ENCODE measurements at regions of chr20 and their contacts with region 1.

Region 1: GRCh38 chr20:33992923-33993575 is 662 bp upstream of the RALY start:
- DNase-seq: peak; percentile 97 to 100 (median 100)
- ATAC-seq: peak; percentile 91
- H3K4me3 ChIP-seq: peak overlapping the region; percentile 96
- H3K4me3 Mint-ChIP-seq: peak overlapping the region; percentile 87 to 99 (median 96)
- H3K27ac ChIP-seq: peak overlapping the region; percentile 97
- H3K27ac Mint-ChIP-seq: peak overlapping the region; percentile 91 to 99 (median 96)
- H3K4me1 ChIP-seq: peaks cover 32 to 43% of the 10 kb centered on the region in 2 donors
- H3K4me1 Mint-ChIP-seq: peaks cover 44 to 69% (median 60%) of the 10 kb centered on the region in 7 donors
- H3K27me3 ChIP-seq: no peaks in the 10 kb centered on the region
- H3K27me3 Mint-ChIP-seq: no peaks in the 10 kb centered on the region

Region 2: DNA sequence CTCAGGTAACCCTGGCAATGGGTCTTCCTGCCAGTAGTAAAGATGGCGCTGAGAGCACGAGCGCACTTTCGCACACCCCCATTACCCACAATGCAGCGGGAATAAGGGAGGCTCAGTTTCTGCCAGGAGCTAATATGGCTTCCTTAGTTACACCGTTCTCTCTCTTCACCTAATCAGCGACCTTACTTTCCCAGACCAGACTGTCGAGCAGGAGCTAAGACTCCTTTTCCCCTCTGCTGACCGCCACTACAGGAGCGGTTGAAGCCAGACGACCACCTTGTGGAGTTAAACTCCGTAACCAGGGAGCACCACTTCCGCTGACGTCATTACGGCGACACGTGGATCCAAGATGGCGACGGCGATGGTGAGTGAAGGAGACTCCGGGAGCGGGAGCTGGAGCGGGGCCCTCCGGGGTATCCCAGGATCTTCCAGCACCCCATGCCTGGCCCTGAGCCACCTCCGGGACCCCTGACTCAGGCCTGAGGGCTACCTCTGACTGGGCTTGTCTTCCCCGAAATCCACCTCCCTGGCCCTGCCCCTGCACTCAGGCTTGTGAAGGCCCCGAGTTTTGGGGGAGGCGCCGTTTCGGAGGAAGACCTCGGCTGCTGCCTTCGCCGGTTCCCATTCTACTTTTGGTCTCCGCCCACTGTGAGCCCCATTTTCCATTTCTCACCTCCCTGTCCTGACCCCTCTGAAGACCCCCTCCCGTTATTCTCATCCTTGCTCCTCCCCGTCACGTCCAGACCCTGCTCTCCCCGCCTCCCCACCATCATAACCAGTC is 1883.5 kb before region 1 on chr20 and contains the start of gene TM9SF4:
- CTCF ChIA-PET with region 1: no interaction called
- POLR2A ChIA-PET with region 1: no interaction called
- intact Hi-C with region 1: loop called in 1 of 2 experiments (anchors 5 kb)
- DNase-seq: peak; percentile 87 to 96 (median 93)
- ATAC-seq: peak; percentile 92
- H3K4me3 ChIP-seq: peak within 1 kb of the TSS; percentile 92
- H3K4me3 Mint-ChIP-seq: peak within 1 kb of the TSS; percentile 78 to 100 (median 96)
- H3K27ac ChIP-seq: peak within 1 kb of the TSS; percentile 94
- H3K27ac Mint-ChIP-seq: peak within 1 kb of the TSS; percentile 95 to 100 (median 100)
- H3K4me1 ChIP-seq: peaks cover 11% of the 10 kb centered on the region in 2 donors
- H3K4me1 Mint-ChIP-seq: peaks cover 26 to 44% (median 39%) of the 10 kb centered on the region in 7 donors
- H3K27me3 ChIP-seq: no peaks in the 10 kb centered on the region
- H3K27me3 Mint-ChIP-seq: no peaks in the 10 kb centered on the region
- total RNA-seq, gene TM9SF4: 35.2 to 61.0 (median 41.5) TPM

Region 3: DNA sequence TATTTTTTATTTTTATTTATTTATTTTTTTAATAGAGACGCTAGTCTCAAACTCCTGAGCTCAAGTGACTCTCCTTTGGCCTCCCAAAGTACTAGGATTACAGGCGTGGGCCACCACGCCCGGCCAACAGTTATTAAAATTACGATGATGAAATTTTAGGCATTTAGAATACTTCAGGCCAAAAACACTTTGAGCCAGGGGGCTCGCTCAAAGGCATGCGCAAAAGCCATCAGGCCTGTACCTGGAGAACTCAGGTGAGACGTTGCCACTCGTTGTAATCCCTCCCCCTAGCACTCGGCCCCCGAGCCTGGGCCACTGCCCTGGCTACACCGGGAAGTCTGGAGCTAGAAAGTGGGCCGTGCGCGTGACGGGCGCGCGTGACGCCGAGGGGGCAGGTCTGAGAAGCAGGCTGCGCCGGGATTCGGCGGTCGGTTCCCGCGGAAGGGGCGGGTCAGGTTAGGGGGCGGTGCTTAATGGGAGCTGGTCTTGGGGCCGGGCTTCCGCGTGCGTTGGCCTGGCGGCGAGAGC is 503.5 kb before region 1 on chr20:
- CTCF ChIA-PET with region 1: no interaction called
- POLR2A ChIA-PET with region 1: interaction called, 6 read pairs
- intact Hi-C with region 1: loop called (anchors 1 kb)
- DNase-seq: peak; percentile 97 to 99 (median 99)
- ATAC-seq: peak; percentile 97
- H3K4me3 ChIP-seq: peak overlapping the region; percentile 75
- H3K4me3 Mint-ChIP-seq: peak overlapping the region; percentile 84 to 95 (median 88)
- H3K27ac ChIP-seq: peak overlapping the region; percentile 94
- H3K27ac Mint-ChIP-seq: peak overlapping the region; percentile 86 to 96 (median 90)
- H3K4me1 ChIP-seq: peaks cover 4 to 9% of the 10 kb centered on the region in 2 donors
- H3K4me1 Mint-ChIP-seq: peaks cover 0 to 30% (median 13%) of the 10 kb centered on the region in 7 donors
- H3K27me3 ChIP-seq: no peaks in the 10 kb centered on the region
- H3K27me3 Mint-ChIP-seq: no peaks in the 10 kb centered on the region

Region 4: GRCh38 chr20:33810885-33811777 is 181.9 kb before region 1 on chr20 and contains the start of gene CHMP4B:
- CTCF ChIA-PET with region 1: no interaction called
- POLR2A ChIA-PET with region 1: interaction called, 14 read pairs
- intact Hi-C with region 1: loop called (anchors 1 kb)
- DNase-seq: peak; percentile 94 to 99 (median 98)
- ATAC-seq: peak; percentile 98
- H3K4me3 ChIP-seq: peak within 1 kb of the TSS; percentile 74
- H3K4me3 Mint-ChIP-seq: peak within 1 kb of the TSS; percentile 89 to 100 (median 95)
- H3K27ac ChIP-seq: peak within 1 kb of the TSS; percentile 95
- H3K27ac Mint-ChIP-seq: peak within 1 kb of the TSS; percentile 84 to 96 (median 91)
- H3K4me1 ChIP-seq: peaks cover 22 to 23% of the 10 kb centered on the region in 2 donors
- H3K4me1 Mint-ChIP-seq: peaks cover 36 to 47% (median 42%) of the 10 kb centered on the region in 7 donors
- H3K27me3 ChIP-seq: no peaks in the 10 kb centered on the region
- H3K27me3 Mint-ChIP-seq: peaks cover 0 to 5% (median 0%) of the 10 kb centered on the region in 5 donors
- total RNA-seq, gene CHMP4B: 47.5 to 80.8 (median 54.4) TPM

Region 5: DNA sequence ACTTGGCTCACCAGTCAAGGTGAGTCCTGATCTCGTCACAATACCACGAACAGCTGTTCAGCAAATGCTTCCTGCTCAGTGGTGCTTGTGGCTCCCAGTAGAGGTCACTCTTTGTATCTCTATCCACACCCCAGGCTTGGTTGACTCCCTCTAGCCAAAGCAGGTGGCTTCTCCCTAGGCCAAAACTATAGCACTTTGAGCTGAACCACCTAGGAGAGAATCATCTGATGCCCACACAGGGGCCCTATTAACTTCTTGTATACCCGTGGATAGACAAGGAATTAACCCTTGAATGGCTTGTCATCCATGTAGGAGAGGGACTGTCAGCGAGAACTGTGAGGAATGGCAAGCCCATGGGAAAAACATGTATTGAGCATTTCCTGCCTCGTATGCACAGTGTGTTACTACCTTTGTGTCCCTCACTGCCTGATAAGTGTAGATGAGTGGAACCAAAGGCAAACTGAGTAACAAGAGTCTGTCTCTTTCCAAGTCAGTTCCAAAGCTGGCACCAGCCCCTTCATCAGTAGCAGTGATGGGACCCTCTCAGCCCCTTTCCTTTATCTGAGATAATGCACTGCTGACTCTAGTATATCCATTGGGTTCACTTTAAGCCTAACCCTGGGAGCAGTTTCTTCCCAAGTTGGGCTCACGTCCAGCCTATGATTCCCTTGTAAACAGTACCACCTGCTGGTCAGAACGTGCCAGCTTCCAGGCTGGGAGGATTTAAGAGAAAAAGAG is 76.5 kb after region 1 on chr20:
- CTCF ChIA-PET with region 1: interaction called, 7 read pairs
- POLR2A ChIA-PET with region 1: interaction called, 12 read pairs
- intact Hi-C with region 1: loop called in 1 of 2 experiments (anchors 1 kb)
- DNase-seq: peak in 8 of 9 donors; percentile 30 to 64 (median 53)
- ATAC-seq: peak; percentile 90
- H3K4me3 ChIP-seq: no peak overlapping the region
- H3K4me3 Mint-ChIP-seq: no peak overlapping the region
- H3K27ac ChIP-seq: peak overlapping the region; percentile 22
- H3K27ac Mint-ChIP-seq: peak overlapping the region in 7 of 9 donors; percentile 10 to 81 (median 41)
- H3K4me1 ChIP-seq: peaks cover 5 to 12% of the 10 kb centered on the region in 2 donors
- H3K4me1 Mint-ChIP-seq: peaks cover 29 to 51% (median 38%) of the 10 kb centered on the region in 7 donors
- H3K27me3 ChIP-seq: no peaks in the 10 kb centered on the region
- H3K27me3 Mint-ChIP-seq: no peaks in the 10 kb centered on the region

Region 6: DNA sequence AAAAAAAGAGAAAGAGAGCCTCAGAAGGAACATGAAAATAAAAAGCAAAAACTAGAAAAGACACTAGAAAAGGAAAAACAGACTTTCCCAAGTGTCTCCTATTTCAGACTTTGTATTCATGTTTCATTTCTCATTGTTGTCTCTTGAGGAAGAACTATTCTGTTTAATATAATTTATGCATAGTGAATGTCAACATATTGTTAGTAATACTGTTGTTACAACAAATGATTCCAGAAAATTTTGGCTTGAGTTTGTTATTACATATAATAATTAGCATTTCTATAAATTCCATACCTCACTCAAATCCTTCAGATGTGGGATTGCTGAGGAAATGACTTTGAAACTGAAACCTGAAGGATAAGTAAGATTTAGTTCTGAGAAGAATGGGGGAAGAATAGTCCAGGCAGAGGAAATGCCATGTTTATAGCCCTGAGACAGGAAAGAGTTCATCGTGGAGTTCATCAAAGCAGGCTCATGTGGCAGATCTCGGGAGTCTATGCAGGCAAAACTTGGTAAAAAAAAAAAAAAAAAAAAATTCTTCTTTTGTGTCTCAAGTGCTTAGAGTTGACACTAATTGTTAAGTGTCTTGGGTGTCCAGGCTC is 172.1 kb after region 1 on chr20:
- CTCF ChIA-PET with region 1: no interaction called
- POLR2A ChIA-PET with region 1: no interaction called
- intact Hi-C with region 1: no loop called
- DNase-seq: no peak
- ATAC-seq: no peak
- H3K4me3 ChIP-seq: no peak overlapping the region
- H3K4me3 Mint-ChIP-seq: no peak overlapping the region
- H3K27ac ChIP-seq: no peak overlapping the region
- H3K27ac Mint-ChIP-seq: peak overlapping the region in 1 of 9 donors; percentile 15
- H3K4me1 ChIP-seq: no peaks in the 10 kb centered on the region
- H3K4me1 Mint-ChIP-seq: peaks cover 0 to 9% (median 5%) of the 10 kb centered on the region in 7 donors
- H3K27me3 ChIP-seq: no peaks in the 10 kb centered on the region
- H3K27me3 Mint-ChIP-seq: peaks cover 0 to 7% (median 2%) of the 10 kb centered on the region in 5 donors

Region 7: GRCh38 chr20:34516247-34517113 is 523.4 kb after region 1 on chr20 and contains the start of gene DYNLRB1:
- CTCF ChIA-PET with region 1: no interaction called
- POLR2A ChIA-PET with region 1: interaction called, 4 read pairs
- intact Hi-C with region 1: loop called in 1 of 2 experiments (anchors 2 kb)
- DNase-seq: peak; percentile 87 to 94 (median 92)
- ATAC-seq: peak; percentile 88
- H3K4me3 ChIP-seq: peak within 1 kb of the TSS; percentile 96
- H3K4me3 Mint-ChIP-seq: peak within 1 kb of the TSS; percentile 97 to 100 (median 99)
- H3K27ac ChIP-seq: peak within 1 kb of the TSS; percentile 86
- H3K27ac Mint-ChIP-seq: peak within 1 kb of the TSS; percentile 94 to 99 (median 97)
- H3K4me1 ChIP-seq: peaks cover 8 to 11% of the 10 kb centered on the region in 2 donors
- H3K4me1 Mint-ChIP-seq: peaks cover 12 to 59% (median 51%) of the 10 kb centered on the region in 7 donors
- H3K27me3 ChIP-seq: no peaks in the 10 kb centered on the region
- H3K27me3 Mint-ChIP-seq: no peaks in the 10 kb centered on the region
- total RNA-seq, gene DYNLRB1: 45.9 to 91.9 (median 60.7) TPM

Region 8: GRCh38 chr20:35619196-35620095 is 1626.4 kb after region 1 on chr20:
- CTCF ChIA-PET with region 1: no interaction called
- POLR2A ChIA-PET with region 1: no interaction called
- intact Hi-C with region 1: loop called in 1 of 2 experiments (anchors 2 kb)
- DNase-seq: peak; percentile 54 to 84 (median 68)
- ATAC-seq: peak; percentile 31
- H3K4me3 ChIP-seq: peak overlapping the region; percentile 70
- H3K4me3 Mint-ChIP-seq: peak overlapping the region; percentile 87 to 98 (median 91)
- H3K27ac ChIP-seq: peak overlapping the region; percentile 27
- H3K27ac Mint-ChIP-seq: peak overlapping the region; percentile 62 to 90 (median 85)
- H3K4me1 ChIP-seq: peaks cover 16 to 28% of the 10 kb centered on the region in 2 donors
- H3K4me1 Mint-ChIP-seq: peaks cover 13 to 45% (median 34%) of the 10 kb centered on the region in 7 donors
- H3K27me3 ChIP-seq: no peaks in the 10 kb centered on the region
- H3K27me3 Mint-ChIP-seq: peaks cover 0 to 3% (median 0%) of the 10 kb centered on the region in 5 donors